SK-N-SH (cell line): ENCODE measurements at regions of chr5 and their contacts with region 1.

Region 1: GRCh38 chr5:6765612-6766525 is 52.6 kb downstream of the TENT4A start:
- DNase-seq: peak; percentile 88
- H3K4me3 ChIP-seq: no peak overlapping the region; a peak in 2 of 4 replicates
- H3K27ac ChIP-seq: peak overlapping the region; percentile 51 to 79
- H3K4me1 ChIP-seq: peaks cover 5 to 15% of the 10 kb centered on the region in 2 experiments
- H3K27me3 ChIP-seq: no peaks in the 10 kb centered on the region
- CTCF ChIP-seq: peak; percentile 89
- EP300 ChIP-seq: no peak
- RAD21 ChIP-seq: peak; percentile 91

Region 2: GRCh38 chr5:6504677-6505411 is 261.0 kb before region 1 on chr5:
- CTCF ChIA-PET with region 1: no interaction called
- POLR2A ChIA-PET with region 1: no interaction called
- DNase-seq: no peak
- H3K4me3 ChIP-seq: no peak overlapping the region
- H3K27ac ChIP-seq: no peak overlapping the region
- H3K4me1 ChIP-seq: peaks cover 0 to 8% of the 10 kb centered on the region in 2 experiments; a peak in 1 of 4 replicates
- H3K27me3 ChIP-seq: no peaks in the 10 kb centered on the region
- CTCF ChIP-seq: no peak
- EP300 ChIP-seq: no peak
- RAD21 ChIP-seq: no peak

Region 3: GRCh38 chr5:6745706-6746222 is 20.1 kb before region 1 on chr5:
- CTCF ChIA-PET with region 1: interaction called, 14 read pairs
- POLR2A ChIA-PET with region 1: no interaction called
- DNase-seq: peak; percentile 71
- H3K4me3 ChIP-seq: no peak overlapping the region; a peak in 1 of 4 replicates
- H3K27ac ChIP-seq: no peak overlapping the region; a peak in 1 of 4 replicates
- H3K4me1 ChIP-seq: peaks cover 0 to 10% of the 10 kb centered on the region in 2 experiments; a peak in 1 of 4 replicates
- H3K27me3 ChIP-seq: no peaks in the 10 kb centered on the region
- CTCF ChIP-seq: peak; percentile 90
- EP300 ChIP-seq: no peak
- RAD21 ChIP-seq: peak; percentile 84

Region 4: DNA sequence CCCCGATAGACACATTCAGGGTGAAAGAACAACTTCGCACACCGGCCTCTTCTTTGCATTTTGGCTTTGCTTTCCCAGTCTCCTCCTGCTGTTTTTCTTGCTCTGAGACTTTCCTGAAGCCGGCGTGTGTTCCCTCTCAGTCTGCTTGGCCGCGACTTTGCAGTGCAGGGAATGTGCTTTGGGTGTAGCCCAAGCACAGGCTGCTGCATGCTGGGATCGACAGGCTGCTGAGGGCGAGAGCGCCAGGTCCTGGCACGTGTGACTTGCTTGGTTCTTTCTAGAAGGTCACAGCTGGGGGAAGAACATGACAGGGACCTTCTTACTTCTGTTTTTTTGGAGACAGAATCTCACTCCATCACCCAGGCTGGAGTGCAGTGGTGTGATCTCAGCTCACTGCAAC is 12.0 kb before region 1 on chr5:
- CTCF ChIA-PET with region 1: interaction called, 11 read pairs
- POLR2A ChIA-PET with region 1: no interaction called
- DNase-seq: no peak
- H3K4me3 ChIP-seq: no peak overlapping the region
- H3K27ac ChIP-seq: no peak overlapping the region
- H3K4me1 ChIP-seq: no peaks in the 10 kb centered on the region
- H3K27me3 ChIP-seq: no peaks in the 10 kb centered on the region
- CTCF ChIP-seq: no peak
- EP300 ChIP-seq: no peak
- RAD21 ChIP-seq: no peak

Region 5: DNA sequence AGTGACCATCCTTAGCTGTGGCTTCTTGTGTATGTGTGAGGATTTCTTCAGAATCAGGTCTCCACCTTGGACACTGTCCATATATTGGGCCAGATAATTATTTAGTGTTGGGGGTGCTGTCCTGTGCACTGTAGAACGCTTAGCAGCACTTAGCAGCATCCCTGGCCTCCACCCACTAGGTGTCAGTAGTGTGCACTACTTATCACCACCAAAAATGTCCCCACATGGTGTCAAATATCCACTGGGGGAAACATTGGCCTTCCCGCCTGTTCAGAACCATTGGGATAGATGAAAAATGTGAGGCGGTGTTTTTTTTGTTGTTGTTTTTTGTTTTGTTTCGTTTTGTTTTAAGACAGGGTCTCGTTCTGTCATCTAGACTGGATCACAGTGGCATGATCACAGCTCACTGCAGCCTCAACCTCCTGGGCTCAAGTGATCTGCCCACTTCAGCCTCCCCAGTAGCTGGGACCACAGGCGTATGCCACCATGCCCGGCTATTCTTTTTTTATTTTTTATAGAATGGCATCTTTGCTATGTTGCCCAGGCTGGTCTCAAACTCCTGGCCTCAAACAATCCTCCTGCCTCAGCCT is 15.0 kb after region 1 on chr5:
- CTCF ChIA-PET with region 1: interaction called, 21 read pairs
- POLR2A ChIA-PET with region 1: no interaction called
- DNase-seq: peak; percentile 57
- H3K4me3 ChIP-seq: no peak overlapping the region
- H3K27ac ChIP-seq: no peak overlapping the region
- H3K4me1 ChIP-seq: no peaks in the 10 kb centered on the region
- H3K27me3 ChIP-seq: no peaks in the 10 kb centered on the region
- CTCF ChIP-seq: peak; percentile 63
- EP300 ChIP-seq: no peak
- RAD21 ChIP-seq: 0 out of 2 replicates have a peak, but pooled peaks have one; percentile 12

Region 6: DNA sequence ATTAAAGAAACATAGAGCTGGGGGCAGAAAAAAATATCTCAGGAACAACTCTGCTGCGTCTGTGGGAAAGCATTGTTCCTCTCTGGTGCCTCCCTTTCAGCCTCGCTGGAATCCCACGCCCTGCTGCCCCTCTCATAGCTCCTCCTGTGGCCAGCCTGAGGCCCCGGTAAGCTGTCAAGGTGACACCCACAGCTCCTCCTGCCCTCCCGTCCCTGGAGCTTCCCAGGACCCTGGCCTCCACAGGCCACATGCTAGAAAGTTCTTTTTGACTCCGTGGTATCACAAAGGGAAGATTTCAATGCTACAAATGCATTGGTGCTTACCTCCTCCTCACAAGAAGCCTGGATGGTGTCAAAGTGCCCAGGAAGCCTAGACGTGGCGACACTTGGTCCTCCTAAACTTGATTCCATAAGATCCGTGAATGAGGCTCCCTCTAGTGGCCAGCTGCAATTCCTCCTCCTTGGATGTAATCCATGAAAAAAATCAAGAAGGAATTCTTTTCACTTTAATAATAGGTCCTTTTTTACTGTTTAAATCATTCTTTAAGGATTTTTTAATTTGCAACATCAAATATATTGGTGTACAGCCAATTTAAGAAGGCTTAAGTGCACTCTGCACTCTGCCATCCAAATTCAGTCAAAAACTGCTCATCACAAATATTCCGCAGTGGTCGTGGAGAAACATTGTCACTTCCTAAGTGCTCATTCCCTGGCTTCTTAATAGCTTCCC is 980.2 kb after region 1 on chr5:
- CTCF ChIA-PET with region 1: interaction called, 17 read pairs
- POLR2A ChIA-PET with region 1: no interaction called
- DNase-seq: peak; percentile 59
- H3K4me3 ChIP-seq: no peak overlapping the region; a peak in 1 of 4 replicates
- H3K27ac ChIP-seq: no peak overlapping the region
- H3K4me1 ChIP-seq: no peaks in the 10 kb centered on the region; a peak in 1 of 4 replicates
- H3K27me3 ChIP-seq: no peaks in the 10 kb centered on the region; the same call in 1 of the 2 replicates
- CTCF ChIP-seq: peak; percentile 96
- EP300 ChIP-seq: no peak
- RAD21 ChIP-seq: peak; percentile 73